ENCODE measurements at regions of chr3 and their contacts with region 1.

Region 1: GRCh38 chr3:124688581-124689454 is 41.4 kb upstream of the UMPS start:
- DNase-seq: peak; percentile 88
- H3K4me3 Mint-ChIP-seq: no peak overlapping the region
- H3K27ac Mint-ChIP-seq: no peak overlapping the region
- H3K4me1 Mint-ChIP-seq: peaks cover 5% of the 10 kb centered on the region
- H3K27me3 Mint-ChIP-seq: peaks cover 30% of the 10 kb centered on the region
- CTCF ChIP-seq: peak; percentile 85

Region 2: DNA sequence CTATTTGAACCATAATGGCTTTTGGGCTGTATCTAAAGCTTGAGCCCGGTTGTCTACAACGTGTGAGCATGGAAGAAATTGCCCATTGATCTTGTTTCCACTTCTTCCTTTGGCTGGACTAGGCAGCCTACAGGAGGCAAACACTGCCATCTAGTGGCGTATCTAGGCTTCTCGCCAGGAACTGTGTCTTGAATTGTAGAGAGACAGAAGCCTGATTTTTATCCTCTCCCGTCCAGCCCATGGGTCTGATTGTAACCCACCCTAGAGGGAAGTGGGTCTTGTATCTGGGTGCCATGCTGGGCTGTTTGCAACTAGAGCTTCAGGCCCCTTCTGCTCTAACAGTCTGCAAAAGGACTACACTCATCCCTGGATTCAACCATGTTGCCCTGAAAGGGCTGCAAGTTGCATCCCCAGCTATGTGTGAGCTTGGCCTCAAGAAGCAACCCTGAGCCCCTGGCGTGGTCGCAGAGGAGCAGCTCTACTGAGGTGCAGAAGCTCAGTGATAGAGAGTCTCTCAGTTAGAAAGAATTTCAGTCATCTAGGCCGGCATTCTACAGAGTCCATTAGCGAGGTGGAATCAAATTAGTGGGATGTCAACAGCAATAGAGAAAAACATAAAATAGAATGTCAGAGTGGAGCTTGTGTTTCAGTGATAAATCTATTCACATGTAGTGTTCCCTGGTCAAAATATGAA is 128.8 kb before region 1 on chr3:
- CTCF ChIA-PET with region 1: interaction called, 44 read pairs
- intact Hi-C with region 1: loop called (anchors 1 kb)
- DNase-seq: peak; percentile 74
- H3K4me3 Mint-ChIP-seq: no peak overlapping the region
- H3K27ac Mint-ChIP-seq: no peak overlapping the region
- H3K4me1 Mint-ChIP-seq: peaks cover 24% of the 10 kb centered on the region
- H3K27me3 Mint-ChIP-seq: peaks cover 71% of the 10 kb centered on the region
- CTCF ChIP-seq: peak; percentile 69

Region 3: DNA sequence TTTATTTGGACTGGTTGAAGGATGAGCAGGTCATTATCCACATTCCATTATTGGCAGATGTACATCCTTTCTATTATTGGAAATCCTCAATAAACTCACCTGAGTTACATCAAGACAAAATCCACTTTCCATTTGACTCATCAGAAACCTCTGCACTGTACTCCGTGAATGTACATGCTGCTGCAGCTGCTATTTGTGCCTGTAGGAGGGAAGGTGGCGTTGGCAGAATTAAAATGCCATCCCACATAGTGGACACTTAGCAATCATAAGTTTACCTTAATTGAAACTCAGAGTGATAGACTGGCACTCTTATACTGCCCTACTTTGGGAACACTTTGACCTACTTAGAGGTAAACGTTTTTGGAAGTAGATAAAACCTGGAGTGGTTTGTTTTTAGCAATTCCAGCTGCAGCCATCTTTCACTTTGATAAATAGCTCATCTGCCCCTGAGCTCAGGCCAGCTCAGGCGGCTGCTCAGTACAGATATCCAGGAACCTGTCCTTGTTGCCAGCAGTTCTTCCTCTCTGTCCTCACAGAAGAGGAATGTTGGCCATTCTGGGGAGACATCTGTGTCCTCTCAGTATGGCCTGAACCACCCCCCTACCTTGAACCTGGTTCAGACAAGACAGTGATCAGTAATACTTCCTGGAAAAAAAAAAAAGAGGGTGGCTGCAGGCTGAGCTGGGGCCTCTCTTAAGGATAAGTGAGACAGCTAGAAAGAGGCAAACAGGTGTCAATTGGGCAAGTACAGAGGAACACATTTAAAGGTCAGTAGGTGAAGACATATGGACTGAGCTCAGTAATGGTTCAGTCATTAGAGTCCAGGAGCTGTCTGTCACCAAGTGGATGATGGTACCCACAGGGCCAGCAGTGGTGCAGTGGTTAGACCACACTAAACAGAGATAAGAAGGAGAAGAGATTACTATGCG is 112.0 kb before region 1 on chr3:
- CTCF ChIA-PET with region 1: interaction called, 10 read pairs
- intact Hi-C with region 1: no loop called
- DNase-seq: no peak
- H3K4me3 Mint-ChIP-seq: no peak overlapping the region
- H3K27ac Mint-ChIP-seq: no peak overlapping the region
- H3K4me1 Mint-ChIP-seq: no peaks in the 10 kb centered on the region
- H3K27me3 Mint-ChIP-seq: no peaks in the 10 kb centered on the region
- CTCF ChIP-seq: no peak

Measured in Calu3 (cell line).